ENCODE measurements at regions of chr22 and their contacts with region 1.

Region 1: GRCh38 chr22:21629262-21630149 is at the start of gene YDJC:
- DNase-seq: no peak
- H3K4me3 ChIP-seq: peak within 1 kb of the TSS; percentile 94
- CTCF ChIP-seq: peak; percentile 76

Region 2: GRCh38 chr22:21573750-21574494 is 55.6 kb before region 1 on chr22:
- CTCF ChIA-PET with region 1: interaction called, 12 read pairs
- POLR2A ChIA-PET with region 1: no interaction called
- DNase-seq: no peak
- H3K4me3 ChIP-seq: no peak overlapping the region
- CTCF ChIP-seq: no peak

Region 3: DNA sequence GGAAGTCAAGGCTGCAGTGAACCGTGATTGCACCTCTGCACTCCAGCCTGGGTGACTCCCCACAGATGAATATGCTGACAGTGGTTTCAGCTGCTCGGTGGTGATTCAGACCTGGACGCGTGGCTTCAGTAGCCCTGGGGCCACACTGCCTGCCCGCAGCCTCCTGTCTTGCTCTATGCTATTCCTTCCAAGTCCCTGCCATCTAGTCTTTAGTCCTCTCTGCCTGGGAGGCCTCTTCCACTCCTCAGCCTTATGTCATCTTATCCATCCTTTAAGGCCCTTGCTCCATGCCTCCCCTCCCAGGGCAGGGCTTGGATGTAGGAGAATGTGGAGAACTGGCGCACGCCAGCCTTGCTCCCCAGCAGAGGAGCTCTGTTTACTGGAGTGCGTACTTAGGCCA is 22.7 kb before region 1 on chr22:
- CTCF ChIA-PET with region 1: interaction called, 19 read pairs
- POLR2A ChIA-PET with region 1: no interaction called
- DNase-seq: no peak
- H3K4me3 ChIP-seq: no peak overlapping the region
- CTCF ChIP-seq: no peak

Region 4: DNA sequence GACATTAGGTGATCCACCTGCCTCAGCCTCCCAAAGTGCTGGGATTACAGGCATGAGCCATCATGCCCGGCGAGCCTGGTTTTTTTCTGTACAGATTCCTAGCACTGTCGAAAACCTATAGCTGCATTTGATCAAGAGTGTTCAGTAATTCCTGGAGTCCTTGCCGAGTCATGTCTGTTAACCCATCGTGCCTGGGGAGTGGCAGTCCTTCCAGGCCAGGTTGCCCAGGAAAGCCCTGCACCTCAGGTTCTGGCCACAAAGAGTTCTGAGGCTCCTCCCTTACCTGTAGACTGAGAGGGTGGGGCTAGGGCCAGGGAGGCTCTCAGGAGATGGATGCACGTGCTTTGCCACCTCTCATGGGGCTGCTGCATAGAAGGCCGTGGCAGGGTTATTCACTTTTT is 16.6 kb before region 1 on chr22:
- CTCF ChIA-PET with region 1: interaction called, 41 read pairs
- POLR2A ChIA-PET with region 1: interaction called, 3 read pairs
- DNase-seq: no peak
- H3K4me3 ChIP-seq: no peak overlapping the region
- CTCF ChIP-seq: no peak

Region 5: DNA sequence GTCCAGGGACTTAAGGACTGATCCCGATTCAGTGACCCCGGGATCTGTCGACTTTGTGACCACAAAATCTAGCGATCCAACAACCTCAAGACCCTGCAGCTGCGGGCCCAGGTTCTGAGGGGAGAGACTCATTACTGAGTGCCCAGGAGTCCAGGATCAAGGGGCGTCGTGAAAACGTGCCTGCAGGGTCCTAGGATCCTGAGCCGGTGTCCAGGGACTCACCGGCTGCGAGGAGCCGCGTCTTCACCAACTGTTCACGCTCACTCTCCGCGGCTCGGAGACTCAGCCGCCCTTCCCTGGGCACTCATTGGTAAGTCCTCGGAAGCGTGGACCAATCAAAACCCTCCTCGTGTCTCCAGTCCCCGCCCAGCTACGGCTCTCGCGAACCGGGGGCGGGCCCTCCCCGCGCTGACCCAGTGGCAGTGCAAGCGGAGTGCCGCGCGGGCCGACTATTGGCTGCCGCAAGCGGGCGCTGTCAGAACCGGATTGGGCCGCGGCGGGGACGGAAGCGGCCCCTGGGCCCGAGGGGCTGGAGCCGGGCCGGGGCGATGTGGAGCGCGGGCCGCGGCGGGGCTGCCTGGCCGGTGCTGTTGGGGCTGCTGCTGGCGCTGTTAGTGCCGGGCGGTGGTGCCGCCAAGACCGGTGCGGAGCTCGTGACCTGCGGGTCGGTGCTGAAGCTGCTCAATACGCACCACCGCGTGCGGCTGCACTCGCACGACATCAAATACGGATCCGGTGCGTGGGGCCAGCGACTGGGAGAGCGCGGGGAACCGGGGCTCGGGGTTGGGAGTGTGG is 12.5 kb after region 1 on chr22 and contains the start of gene SDF2L1:
- CTCF ChIA-PET with region 1: interaction called, 158 read pairs
- POLR2A ChIA-PET with region 1: interaction called, 5 read pairs
- DNase-seq: peak; percentile 91
- H3K4me3 ChIP-seq: peak within 1 kb of the TSS; percentile 74
- CTCF ChIP-seq: peak; percentile 21

Region 6: DNA sequence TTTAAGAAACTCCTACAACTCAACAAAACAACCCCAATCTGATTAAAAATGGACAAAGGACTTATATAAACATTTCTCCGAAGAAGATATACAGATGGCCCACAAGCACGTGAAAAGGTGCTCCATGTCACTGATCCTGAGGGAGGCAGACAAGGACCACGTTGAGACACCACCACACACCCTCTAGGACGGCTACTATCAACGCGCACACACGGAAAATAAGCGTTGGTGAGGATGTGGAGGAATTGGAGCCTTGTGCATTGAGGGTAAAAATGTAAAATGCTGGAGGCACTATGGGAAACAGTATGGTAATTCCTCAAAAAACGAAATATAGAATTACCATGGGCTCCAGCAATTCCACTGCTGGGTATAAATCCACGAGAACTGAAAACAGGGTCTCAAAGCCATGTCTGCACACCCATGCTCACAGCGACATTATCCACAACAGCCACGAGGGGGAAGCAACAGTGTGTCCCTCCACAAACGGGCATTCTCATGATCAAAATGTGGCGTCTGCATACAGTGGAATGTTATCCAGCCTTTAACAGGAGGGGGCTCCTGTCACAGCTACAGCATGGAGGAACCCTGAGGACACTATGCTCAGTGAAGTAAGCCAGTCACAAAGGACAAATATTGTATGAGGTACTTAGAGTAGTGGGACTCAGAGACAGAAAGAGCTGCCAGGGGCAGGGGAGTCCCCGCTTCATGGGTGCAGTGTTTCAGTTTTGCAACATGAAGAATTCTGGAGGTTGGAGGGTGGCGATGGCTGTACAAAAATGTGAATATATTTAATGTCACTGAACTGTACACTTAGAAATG is 83.6 kb after region 1 on chr22:
- CTCF ChIA-PET with region 1: no interaction called
- POLR2A ChIA-PET with region 1: no interaction called
- DNase-seq: no peak
- H3K4me3 ChIP-seq: peak overlapping the region; percentile 28
- CTCF ChIP-seq: peak; percentile 81

Measured in AG04449 (cell line).